ENCODE measurements at regions of chr1 and their contacts with region 1.

Region 1: GRCh38 chr1:36306902-36307456 is 811 bp downstream of the SH3D21 start:
- DNase-seq: peak; percentile 98
- ATAC-seq: peak; percentile 96
- H3K4me3 ChIP-seq: peak overlapping the region; percentile 83
- H3K27ac ChIP-seq: 0 out of 2 replicates have a peak overlapping the region, but pooled peaks have one; percentile 53
- H3K4me1 ChIP-seq: peaks cover 21% of the 10 kb centered on the region
- H3K27me3 ChIP-seq: no peaks in the 10 kb centered on the region
- CTCF ChIP-seq: no peak

Region 2: GRCh38 chr1:35641233-35641866 is 665.6 kb before region 1 on chr1 and contains the start of gene PSMB2:
- CTCF ChIA-PET with region 1: no interaction called
- POLR2A ChIA-PET with region 1: interaction called, 12 read pairs
- intact Hi-C with region 1: no loop called
- DNase-seq: peak; percentile 98
- ATAC-seq: peak; percentile 86
- H3K4me3 ChIP-seq: peak within 1 kb of the TSS; percentile 95
- H3K27ac ChIP-seq: peak within 1 kb of the TSS; percentile 79
- H3K4me1 ChIP-seq: peaks cover 22% of the 10 kb centered on the region
- H3K27me3 ChIP-seq: no peaks in the 10 kb centered on the region
- CTCF ChIP-seq: no peak
- total RNA-seq, gene PSMB2: 61.2 and 88.7 TPM in 2 replicates

Region 3: DNA sequence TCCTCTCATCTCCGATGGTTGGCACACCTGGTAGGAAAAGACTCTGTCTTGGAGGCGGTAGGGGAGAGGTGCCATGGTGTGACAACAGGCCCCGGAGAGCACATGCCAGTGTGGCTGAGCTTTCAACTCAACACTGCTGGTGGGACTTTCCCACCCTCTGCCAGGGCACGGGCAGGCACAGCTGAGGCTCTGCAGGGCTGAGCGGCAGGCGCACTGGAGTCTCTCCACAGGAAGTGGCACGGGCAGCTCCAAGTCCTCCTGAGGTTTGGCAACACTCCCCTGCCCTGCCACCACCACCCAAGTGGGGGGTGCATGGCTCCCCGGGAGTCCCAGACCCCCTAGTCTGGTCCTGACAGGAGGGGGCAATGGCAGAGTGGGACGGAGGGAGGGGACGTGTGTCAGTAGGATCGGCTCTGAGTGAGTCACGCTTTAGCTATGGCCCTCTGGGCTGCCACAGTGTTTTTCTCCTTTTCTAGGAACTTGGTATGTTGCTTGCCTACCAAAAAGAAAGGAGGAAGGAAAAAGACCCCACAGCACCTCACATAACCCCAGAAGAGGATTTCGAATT is 43.8 kb after region 1 on chr1:
- CTCF ChIA-PET with region 1: no interaction called
- POLR2A ChIA-PET with region 1: no interaction called
- intact Hi-C with region 1: loop called (anchors 1 kb)
- DNase-seq: peak; percentile 85
- ATAC-seq: peak; percentile 69
- H3K4me3 ChIP-seq: no peak overlapping the region; the same call in 1 of the 2 replicates
- H3K27ac ChIP-seq: peak overlapping the region; percentile 92
- H3K4me1 ChIP-seq: peaks cover 49% of the 10 kb centered on the region
- H3K27me3 ChIP-seq: no peaks in the 10 kb centered on the region
- CTCF ChIP-seq: no peak

Region 4: GRCh38 chr1:36369061-36369861 is 62.3 kb after region 1 on chr1:
- CTCF ChIA-PET with region 1: no interaction called
- POLR2A ChIA-PET with region 1: no interaction called
- intact Hi-C with region 1: no loop called
- DNase-seq: peak; percentile 87
- ATAC-seq: peak; percentile 29
- H3K4me3 ChIP-seq: no peak overlapping the region
- H3K27ac ChIP-seq: no peak overlapping the region
- H3K4me1 ChIP-seq: peaks cover 37% of the 10 kb centered on the region
- H3K27me3 ChIP-seq: no peaks in the 10 kb centered on the region
- CTCF ChIP-seq: peak; percentile 84

Region 5: DNA sequence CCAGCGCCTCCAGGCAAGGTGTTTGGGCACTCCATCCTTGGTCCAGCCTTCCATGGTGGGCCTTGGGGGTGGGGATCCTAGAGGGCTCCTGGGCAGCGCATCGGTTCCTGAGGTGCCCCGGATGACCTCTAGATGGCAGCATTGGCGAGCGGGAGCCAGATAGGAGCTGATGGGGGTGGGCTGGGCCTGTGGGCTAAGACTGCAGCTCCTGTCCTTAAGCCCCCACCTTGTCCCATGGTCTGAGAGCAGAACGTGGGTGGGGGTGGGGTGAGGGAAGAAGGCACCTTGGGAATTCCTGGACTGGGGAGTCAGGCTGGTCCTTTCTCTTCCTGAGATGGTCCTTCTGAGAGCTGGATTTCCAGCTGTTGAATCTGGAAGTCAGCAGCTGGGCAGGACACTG is 269.1 kb after region 1 on chr1:
- CTCF ChIA-PET with region 1: no interaction called
- POLR2A ChIA-PET with region 1: no interaction called
- intact Hi-C with region 1: no loop called
- DNase-seq: peak; percentile 66
- ATAC-seq: peak; percentile 94
- H3K4me3 ChIP-seq: no peak overlapping the region
- H3K27ac ChIP-seq: no peak overlapping the region
- H3K4me1 ChIP-seq: no peaks in the 10 kb centered on the region
- H3K27me3 ChIP-seq: peaks cover 31% of the 10 kb centered on the region
- CTCF ChIP-seq: peak; percentile 75

Region 6: DNA sequence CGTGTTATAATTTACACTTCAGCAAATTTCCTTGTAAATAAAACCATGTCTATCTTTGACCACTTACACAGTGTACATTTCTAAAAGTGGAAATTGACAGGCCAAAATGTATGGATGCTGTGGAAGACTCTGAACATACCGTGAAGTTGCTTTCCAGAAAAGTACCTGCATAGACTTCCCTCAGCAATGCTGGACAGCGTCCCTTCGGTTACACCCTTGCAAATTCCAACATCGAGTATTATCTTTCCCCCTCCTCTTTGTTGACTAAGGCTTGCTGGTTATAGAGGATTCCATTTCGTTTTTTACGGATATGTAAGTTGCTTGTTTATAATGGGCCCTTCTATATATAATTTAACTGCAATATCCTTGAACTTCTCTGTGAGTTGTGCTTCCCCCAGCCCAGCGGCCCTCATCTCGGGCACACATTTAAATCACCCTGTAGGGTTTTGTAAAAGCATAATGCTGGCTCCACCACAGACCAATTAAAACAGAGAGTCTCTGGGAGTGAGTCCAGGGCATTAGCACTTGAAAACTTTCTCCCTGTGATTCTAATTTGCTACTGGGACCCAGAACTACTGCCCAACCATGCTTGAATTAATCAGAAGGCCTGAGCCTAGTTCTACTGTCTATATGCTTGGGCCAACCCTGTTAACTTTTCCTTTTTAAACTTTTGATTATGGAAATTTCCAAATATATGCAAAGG is 497.0 kb after region 1 on chr1:
- CTCF ChIA-PET with region 1: no interaction called
- POLR2A ChIA-PET with region 1: no interaction called
- intact Hi-C with region 1: no loop called
- DNase-seq: no peak
- ATAC-seq: no peak
- H3K4me3 ChIP-seq: no peak overlapping the region
- H3K27ac ChIP-seq: no peak overlapping the region
- H3K4me1 ChIP-seq: no peaks in the 10 kb centered on the region
- H3K27me3 ChIP-seq: peaks cover 54% of the 10 kb centered on the region
- CTCF ChIP-seq: no peak

Measured in PC-3 (cell line).